Ovary (tissue), 10 donors: ENCODE measurements at regions of chr4 and their contacts with region 1.

Region 1: GRCh38 chr4:140359562-140360427 is 13.7 kb upstream of the SCOC start:
- DNase-seq: peak; percentile 62 to 81 (median 64)
- H3K4me3 ChIP-seq: no peak overlapping the region
- H3K27ac ChIP-seq: no peak overlapping the region
- H3K4me1 ChIP-seq: no peaks in the 10 kb centered on the region
- H3K27me3 ChIP-seq: no peaks in the 10 kb centered on the region
- CTCF ChIP-seq: peak; percentile 44 to 81 (median 62)
- EP300 ChIP-seq: no peak
- POLR2A ChIP-seq: no peak

Region 2: DNA sequence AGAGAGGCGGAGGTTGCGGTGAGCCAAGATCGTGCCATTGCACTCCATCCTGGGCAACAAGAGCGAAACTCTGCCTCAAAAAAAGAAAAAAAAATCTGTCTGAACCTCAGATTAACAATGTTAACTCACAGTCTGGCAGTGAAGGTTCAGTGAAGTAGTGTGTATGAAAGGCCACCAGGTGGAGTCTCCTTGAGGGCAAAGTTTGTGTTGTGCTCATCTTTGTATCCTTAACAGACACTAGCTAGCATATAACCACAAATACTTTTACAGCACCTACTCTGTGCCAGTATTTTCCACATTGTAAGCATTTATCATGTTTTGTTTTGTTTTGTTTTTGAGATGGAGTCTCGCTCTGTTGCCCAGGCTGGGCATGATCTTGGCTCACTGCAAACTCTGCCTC is 740.2 kb before region 1 on chr4:
- intact Hi-C with region 1: no loop called
- DNase-seq: no peak
- H3K4me3 ChIP-seq: no peak overlapping the region
- H3K27ac ChIP-seq: no peak overlapping the region
- H3K4me1 ChIP-seq: no peaks in the 10 kb centered on the region
- H3K27me3 ChIP-seq: no peaks in the 10 kb centered on the region
- CTCF ChIP-seq: no peak
- EP300 ChIP-seq: no peak
- POLR2A ChIP-seq: no peak

Region 3: DNA sequence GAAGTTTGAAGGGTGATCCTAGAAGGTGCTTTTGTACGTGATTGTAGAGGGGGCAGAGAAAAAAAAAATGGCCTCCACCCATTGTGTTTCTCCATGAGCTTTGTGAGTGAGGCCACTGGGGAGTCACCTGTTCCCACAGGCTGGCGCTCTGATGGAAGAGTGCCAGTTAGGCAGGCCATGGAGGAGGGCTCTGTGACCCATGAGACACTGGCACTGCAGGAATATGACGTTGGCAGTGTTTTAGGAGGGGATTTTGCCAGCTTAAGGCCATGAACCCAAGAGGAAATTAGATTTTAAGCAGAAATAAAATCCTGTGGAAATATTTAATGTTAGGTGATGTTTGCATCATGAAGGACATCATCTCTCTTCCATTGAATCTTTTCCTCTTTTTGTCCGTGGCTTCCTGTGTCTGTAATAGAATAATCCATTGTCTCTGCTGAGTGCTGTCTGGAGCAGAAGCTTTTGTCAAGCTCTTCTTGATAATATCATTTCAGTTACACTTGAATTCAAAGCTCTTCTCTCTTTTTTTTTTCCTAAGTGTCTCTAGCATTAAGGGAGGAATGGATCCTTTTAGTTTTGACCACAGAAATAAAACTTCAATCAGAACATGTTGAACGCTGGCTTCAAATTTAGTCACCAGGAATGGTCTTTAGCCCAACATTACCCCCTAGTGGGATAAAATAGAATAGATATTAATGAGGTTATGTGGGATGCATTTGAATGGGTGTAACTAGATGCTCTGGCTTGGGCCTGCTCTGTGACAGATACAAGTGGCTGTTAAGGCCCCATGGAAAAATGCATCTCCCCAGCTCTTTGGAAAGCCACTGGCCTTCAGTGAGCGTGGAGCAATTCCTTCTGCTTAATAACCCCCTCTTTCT is 250.0 kb after region 1 on chr4:
- intact Hi-C with region 1: loop called in 2 of 4 experiments (anchors 10 kb)
- DNase-seq: peak in 1 of 5 donors; percentile 23
- H3K4me3 ChIP-seq: no peak overlapping the region
- H3K27ac ChIP-seq: no peak overlapping the region
- H3K4me1 ChIP-seq: no peaks in the 10 kb centered on the region
- H3K27me3 ChIP-seq: no peaks in the 10 kb centered on the region
- CTCF ChIP-seq: peak; percentile 13 to 40 (median 23)
- EP300 ChIP-seq: no peak
- POLR2A ChIP-seq: no peak

Region 4: GRCh38 chr4:140641789-140642439 is 282.1 kb after region 1 on chr4:
- intact Hi-C with region 1: loop called in 1 of 4 experiments (anchors 10 kb)
- DNase-seq: peak; percentile 69 to 78 (median 72)
- H3K4me3 ChIP-seq: peak overlapping the region; percentile 16
- H3K27ac ChIP-seq: peak overlapping the region; percentile 44 to 81
- H3K4me1 ChIP-seq: peaks cover 11% of the 10 kb centered on the region
- H3K27me3 ChIP-seq: no peaks in the 10 kb centered on the region
- CTCF ChIP-seq: peak in 2 of 3 donors; percentile 10 to 47
- EP300 ChIP-seq: no peak
- POLR2A ChIP-seq: no peak

Region 5: DNA sequence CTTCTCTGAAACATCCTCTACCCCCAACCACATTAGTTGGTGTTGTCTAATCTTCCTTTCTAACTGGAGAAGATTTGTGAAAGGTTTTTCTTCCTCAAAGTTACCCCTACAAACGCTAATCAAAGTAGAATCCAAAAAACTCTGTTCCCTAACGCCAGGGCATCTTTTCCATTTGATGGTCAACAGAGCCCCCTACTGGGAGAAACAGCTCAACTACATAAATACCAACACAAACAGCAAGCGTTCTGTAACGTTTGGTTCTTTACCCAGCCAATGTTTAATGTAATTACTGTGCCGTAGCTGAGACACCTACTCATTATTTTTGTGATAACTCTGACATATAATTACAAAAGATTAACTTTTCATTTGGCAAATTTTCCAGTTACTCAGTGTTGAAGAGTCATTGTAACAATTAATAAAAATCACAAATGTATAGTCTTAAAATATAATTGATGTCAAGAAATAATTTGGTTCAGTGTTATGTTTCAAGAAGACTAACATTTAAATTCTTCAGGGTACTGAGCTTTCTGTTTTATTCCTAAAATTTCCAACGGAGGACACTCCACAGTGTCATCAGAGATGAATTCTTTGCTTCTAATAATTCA is 491.3 kb after region 1 on chr4:
- intact Hi-C with region 1: loop called (anchors 5 to 10 kb)
- DNase-seq: peak in 4 of 5 donors; percentile 26 to 61 (median 27)
- H3K4me3 ChIP-seq: no peak overlapping the region
- H3K27ac ChIP-seq: no peak overlapping the region
- H3K4me1 ChIP-seq: no peaks in the 10 kb centered on the region
- H3K27me3 ChIP-seq: no peaks in the 10 kb centered on the region
- CTCF ChIP-seq: peak; percentile 44 to 92 (median 85)
- EP300 ChIP-seq: no peak
- POLR2A ChIP-seq: no peak

Region 6: GRCh38 chr4:141133146-141133998 is 773.6 kb after region 1 on chr4 and contains the start of gene RNF150:
- intact Hi-C with region 1: loop called in 1 of 4 experiments (anchors 10 kb)
- DNase-seq: peak; percentile 76 to 88 (median 85)
- H3K4me3 ChIP-seq: peak within 1 kb of the TSS; percentile 95
- H3K27ac ChIP-seq: peak within 1 kb of the TSS; percentile 68 to 73
- H3K4me1 ChIP-seq: peaks cover 5% of the 10 kb centered on the region
- H3K27me3 ChIP-seq: no peaks in the 10 kb centered on the region
- CTCF ChIP-seq: peak; percentile 68 to 83 (median 79)
- EP300 ChIP-seq: no peak
- POLR2A ChIP-seq: peak; percentile 28
- total RNA-seq, gene RNF150: 14.7 to 43.2 (median 34.5) TPM